K562 (cell line): ENCODE measurements at regions of chr3 and their contacts with region 1.

Region 1: DNA sequence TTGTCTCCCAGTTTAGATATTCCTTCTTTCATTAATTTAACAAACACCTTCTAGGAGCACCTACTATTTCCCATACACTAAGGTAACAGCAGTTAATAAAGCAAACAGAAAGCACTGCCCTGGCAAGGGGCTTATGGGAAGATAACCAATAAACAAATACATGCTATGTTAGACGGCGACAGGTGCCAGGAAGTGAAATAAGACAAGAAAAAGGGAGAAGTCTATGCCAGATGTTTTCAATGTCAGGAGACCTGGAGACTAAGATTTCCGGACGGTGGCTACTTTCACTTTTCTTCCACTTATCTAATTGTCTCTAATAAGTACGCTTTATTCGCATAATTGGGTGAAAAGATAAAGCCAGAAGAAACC is 32.5 kb upstream of the ZNF445 start:
- DNase-seq: peak; percentile 24 to 38 (median 30)
- ATAC-seq: peak; percentile 17
- H3K4me3 ChIP-seq: peak overlapping the region; percentile 91
- H3K27ac ChIP-seq: peak overlapping the region; percentile 67
- H3K4me1 ChIP-seq: peaks cover 5 to 17% of the 10 kb centered on the region in 2 experiments; a peak in 4 of 5 replicates
- H3K27me3 ChIP-seq: no peaks in the 10 kb centered on the region
- CTCF ChIP-seq: no peak
- EP300 ChIP-seq: no peak
- POLR2A ChIP-seq: no peak
- RAD21 ChIP-seq: no peak

Region 2: GRCh38 chr3:44477312-44478030 is 32.5 kb before region 1 on chr3 and contains the start of gene ZNF445:
- CTCF ChIA-PET with region 1: no interaction called
- POLR2A ChIA-PET with region 1: interaction called, 4 read pairs
- in situ Hi-C with region 1: no loop called
- intact Hi-C with region 1: loop called (anchors 1 kb)
- DNase-seq: peak; percentile 91 to 96 (median 95)
- ATAC-seq: peak; percentile 94
- H3K4me3 ChIP-seq: peak within 1 kb of the TSS; percentile 82
- H3K27ac ChIP-seq: peak within 1 kb of the TSS; percentile 72
- H3K4me1 ChIP-seq: peaks cover 12 to 24% of the 10 kb centered on the region in 2 experiments; a peak in 4 of 5 replicates
- H3K27me3 ChIP-seq: no peaks in the 10 kb centered on the region
- CTCF ChIP-seq: no peak
- EP300 ChIP-seq: peak; percentile 11; the same call in 1 of the 2 replicates
- POLR2A ChIP-seq: peak; percentile 76
- RAD21 ChIP-seq: no peak
- polyA plus RNA-seq, gene ZNF445: 1.2 to 1.8 TPM

Region 3: DNA sequence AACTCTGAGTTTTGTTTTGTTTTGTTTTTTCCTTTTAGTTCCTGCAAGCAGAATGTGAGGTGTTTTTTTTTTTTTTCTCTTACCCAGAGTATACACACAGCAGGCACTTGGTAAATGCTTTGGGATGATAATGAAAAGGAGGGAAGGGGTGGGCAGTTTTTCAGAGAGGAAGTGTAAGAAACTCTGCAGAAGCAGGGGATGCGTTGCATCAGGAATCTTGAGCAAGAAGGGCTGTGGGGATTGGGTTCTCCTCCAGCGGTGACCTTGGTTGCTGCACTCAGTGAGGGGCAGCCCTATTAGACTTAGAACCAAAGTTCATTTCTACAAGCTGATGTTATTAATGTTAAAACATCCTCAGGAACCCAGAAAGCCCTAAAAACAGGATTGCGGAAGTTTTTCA is 748.3 kb after region 1 on chr3:
- CTCF ChIA-PET with region 1: no interaction called
- POLR2A ChIA-PET with region 1: no interaction called
- in situ Hi-C with region 1: no loop called
- intact Hi-C with region 1: loop called (anchors 5 kb)
- DNase-seq: no peak
- ATAC-seq: peak; percentile 48; the same call in 2 of the 3 replicates
- H3K4me3 ChIP-seq: no peak overlapping the region
- H3K27ac ChIP-seq: no peak overlapping the region
- H3K4me1 ChIP-seq: no peaks in the 10 kb centered on the region
- H3K27me3 ChIP-seq: no peaks in the 10 kb centered on the region
- CTCF ChIP-seq: no peak
- EP300 ChIP-seq: no peak
- POLR2A ChIP-seq: no peak
- RAD21 ChIP-seq: no peak